Activated CD8-positive, alpha-beta T cell treated with anti-CD3 and anti-CD28 coated beads for 36 hours (primary cell): ENCODE measurements at regions of chr12 and their contacts with region 1.

Region 1: DNA sequence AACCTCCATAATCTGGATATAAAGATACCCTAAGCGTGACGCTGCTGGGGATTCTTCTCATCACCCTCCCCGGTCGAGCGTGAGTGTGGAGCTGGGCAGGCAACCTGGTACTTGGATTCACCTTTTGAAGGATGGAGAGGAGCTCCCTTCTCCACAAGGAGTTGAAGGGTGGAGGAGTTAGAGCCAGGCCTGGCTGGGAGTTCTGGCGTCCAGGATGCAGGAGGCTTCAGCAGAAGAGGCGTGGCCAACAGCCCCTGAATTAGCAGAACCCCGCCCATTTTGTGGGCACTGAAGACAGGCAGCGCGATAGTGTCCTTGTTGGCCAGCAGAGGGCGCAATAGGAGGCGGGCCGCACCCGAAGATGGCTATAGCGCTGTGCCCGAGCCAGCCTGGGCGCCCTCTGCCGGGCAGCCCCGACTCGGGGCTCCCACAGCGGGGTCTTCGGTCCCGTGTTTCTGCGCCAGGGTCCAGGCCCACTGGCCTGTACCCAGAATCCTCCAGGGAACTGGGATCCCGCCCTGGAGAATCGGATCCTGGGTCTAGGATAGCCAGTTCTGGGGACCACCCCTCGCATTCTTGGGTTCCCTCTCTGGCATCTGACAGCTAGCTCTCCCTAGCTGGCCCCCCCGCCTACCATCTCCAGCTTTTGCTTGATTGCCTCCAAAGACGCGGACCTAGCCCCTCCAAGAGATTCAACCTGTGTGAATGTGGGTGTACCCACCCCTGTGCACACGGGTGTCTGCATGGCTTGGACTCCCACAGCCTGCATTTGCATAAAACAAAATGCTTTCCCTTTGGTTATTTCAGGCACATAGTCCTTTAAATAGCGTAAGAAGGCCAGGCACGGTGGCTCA is 26.0 kb upstream of the SMUG1 start:
- DNase-seq: peak; percentile 95
- ATAC-seq: peak; percentile 88
- H3K4me3 Mint-ChIP-seq: peak overlapping the region; percentile 76
- H3K27ac Mint-ChIP-seq: no peak overlapping the region
- H3K4me1 Mint-ChIP-seq: peaks cover 21% of the 10 kb centered on the region
- H3K27me3 Mint-ChIP-seq: peaks cover 20% of the 10 kb centered on the region
- CTCF ChIP-seq: peak; percentile 100

Region 2: DNA sequence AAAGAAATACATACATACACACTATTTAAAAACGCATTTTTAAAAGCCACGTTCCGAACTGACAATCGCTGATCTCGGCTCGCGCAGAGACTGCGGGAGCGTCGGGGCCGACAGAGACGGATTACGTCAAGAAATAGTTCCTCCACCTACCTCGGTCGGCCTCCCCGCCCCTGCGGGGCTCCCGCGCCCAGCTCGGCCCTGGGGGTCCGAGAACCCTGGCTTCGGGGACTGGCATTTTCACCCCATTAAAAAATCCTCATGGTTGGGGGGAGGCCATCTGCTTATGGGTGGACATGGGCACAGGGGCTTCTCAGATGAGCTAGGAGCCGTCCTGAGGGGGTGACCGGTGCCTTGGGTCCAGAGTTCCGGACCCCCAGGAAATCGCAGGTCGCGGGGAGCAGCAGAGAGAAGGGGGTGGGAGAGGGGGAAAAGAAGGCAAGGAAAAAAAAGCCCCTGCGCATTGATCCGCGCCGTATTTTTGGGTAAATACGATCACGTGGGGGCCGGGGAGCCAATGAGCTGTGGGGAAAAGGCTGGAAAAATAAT is 215.1 kb before region 1 on chr12:
- CTCF ChIA-PET with region 1: interaction called, 16 read pairs
- POLR2A ChIA-PET with region 1: no interaction called
- intact Hi-C with region 1: no loop called
- DNase-seq: peak; percentile 55
- ATAC-seq: no peak
- H3K4me3 Mint-ChIP-seq: peak overlapping the region; percentile 43
- H3K27ac Mint-ChIP-seq: no peak overlapping the region
- H3K4me1 Mint-ChIP-seq: peaks cover 26% of the 10 kb centered on the region
- H3K27me3 Mint-ChIP-seq: peaks cover 85% of the 10 kb centered on the region
- CTCF ChIP-seq: no peak

Region 3: GRCh38 chr12:54131641-54132280 is 83.0 kb before region 1 on chr12:
- CTCF ChIA-PET with region 1: no interaction called
- POLR2A ChIA-PET with region 1: no interaction called
- intact Hi-C with region 1: no loop called
- DNase-seq: no peak
- ATAC-seq: no peak
- H3K4me3 Mint-ChIP-seq: no peak overlapping the region
- H3K27ac Mint-ChIP-seq: no peak overlapping the region
- H3K4me1 Mint-ChIP-seq: peaks cover 6% of the 10 kb centered on the region
- H3K27me3 Mint-ChIP-seq: peaks cover 24% of the 10 kb centered on the region
- CTCF ChIP-seq: no peak

Region 4: GRCh38 chr12:54147186-54147585 is 67.6 kb before region 1 on chr12:
- CTCF ChIA-PET with region 1: no interaction called
- POLR2A ChIA-PET with region 1: no interaction called
- intact Hi-C with region 1: no loop called
- DNase-seq: no peak
- ATAC-seq: no peak
- H3K4me3 Mint-ChIP-seq: no peak overlapping the region
- H3K27ac Mint-ChIP-seq: no peak overlapping the region
- H3K4me1 Mint-ChIP-seq: no peaks in the 10 kb centered on the region
- H3K27me3 Mint-ChIP-seq: no peaks in the 10 kb centered on the region
- CTCF ChIP-seq: no peak

Region 5: DNA sequence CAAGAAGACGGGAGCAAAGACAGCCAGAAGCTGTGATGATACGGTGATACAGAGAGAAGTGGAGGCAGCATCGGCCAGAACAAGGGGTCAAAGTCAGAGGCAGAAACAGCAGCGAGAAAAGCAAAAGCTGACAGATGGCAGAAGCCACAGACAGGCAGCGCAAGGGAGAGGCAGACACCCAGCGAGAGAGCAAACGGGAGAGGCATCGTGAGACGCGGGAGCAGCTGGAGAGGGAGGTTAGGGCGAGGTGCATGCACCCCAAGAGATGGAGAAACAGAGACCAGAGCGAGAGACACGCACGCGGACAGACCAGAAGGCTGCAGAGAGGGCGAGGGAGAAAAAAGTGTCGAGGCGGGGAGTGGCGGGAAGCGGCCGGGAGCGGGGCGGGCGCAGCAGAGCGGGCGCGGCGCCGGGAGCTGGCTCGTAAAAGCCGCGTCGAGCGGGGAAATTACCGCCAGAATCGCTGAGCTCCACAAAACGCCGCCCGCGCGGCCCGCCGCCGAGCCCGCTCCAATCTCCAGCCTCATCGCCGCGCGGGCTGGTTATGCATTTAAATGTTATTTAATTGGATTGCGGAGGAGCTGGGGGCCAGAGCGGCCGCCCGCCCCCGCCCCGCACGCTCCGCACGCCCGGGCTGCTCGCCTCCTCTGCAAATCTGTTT is 41.6 kb before region 1 on chr12:
- CTCF ChIA-PET with region 1: interaction called, 11 read pairs
- POLR2A ChIA-PET with region 1: no interaction called
- intact Hi-C with region 1: no loop called
- DNase-seq: peak; percentile 51
- ATAC-seq: peak; percentile 76
- H3K4me3 Mint-ChIP-seq: no peak overlapping the region
- H3K27ac Mint-ChIP-seq: no peak overlapping the region
- H3K4me1 Mint-ChIP-seq: no peaks in the 10 kb centered on the region
- H3K27me3 Mint-ChIP-seq: peaks cover 4% of the 10 kb centered on the region
- CTCF ChIP-seq: no peak

Region 6: DNA sequence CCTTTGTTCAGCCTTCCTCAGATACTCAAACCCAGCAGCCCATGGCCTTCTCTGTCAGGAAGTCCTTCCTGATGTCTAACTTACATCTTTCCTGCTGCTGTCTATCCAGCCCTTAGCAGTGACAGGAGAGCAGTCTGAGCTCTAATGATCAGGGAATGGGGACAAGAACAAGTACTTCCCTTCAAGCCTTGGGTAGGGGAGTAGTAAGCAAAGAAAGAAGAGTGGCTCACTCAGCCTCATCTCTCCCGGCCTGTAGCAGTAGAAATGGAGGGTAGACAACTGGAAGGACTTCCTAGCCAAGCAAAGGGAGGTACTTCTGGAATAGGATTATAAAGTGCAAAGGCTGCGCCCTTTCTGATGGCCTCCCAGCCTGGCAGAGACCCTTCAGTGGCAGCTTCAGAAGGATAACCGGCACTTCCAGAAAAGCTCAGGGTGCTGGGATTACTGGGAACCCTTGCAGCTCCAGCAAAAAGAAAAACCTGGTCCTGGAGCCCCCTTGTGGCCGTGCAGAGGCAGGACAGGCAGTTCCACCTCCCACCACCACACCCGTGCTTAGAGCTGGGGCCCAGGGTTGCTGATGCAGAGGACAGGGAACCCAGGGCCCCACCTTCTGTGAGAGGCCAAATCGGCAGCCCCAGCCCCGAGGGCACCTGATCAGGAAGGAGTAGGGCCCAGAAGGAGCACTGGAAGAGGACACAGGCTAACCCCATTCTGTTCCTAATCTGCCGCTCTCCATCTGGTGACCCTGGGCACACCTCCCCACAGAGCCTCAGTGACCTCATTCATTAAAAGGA is 13.6 kb before region 1 on chr12:
- CTCF ChIA-PET with region 1: interaction called, 45 read pairs
- POLR2A ChIA-PET with region 1: no interaction called
- intact Hi-C with region 1: no loop called
- DNase-seq: peak; percentile 72
- ATAC-seq: peak; percentile 96
- H3K4me3 Mint-ChIP-seq: no peak overlapping the region
- H3K27ac Mint-ChIP-seq: no peak overlapping the region
- H3K4me1 Mint-ChIP-seq: no peaks in the 10 kb centered on the region
- H3K27me3 Mint-ChIP-seq: peaks cover 52% of the 10 kb centered on the region
- CTCF ChIP-seq: peak; percentile 94

Region 7: DNA sequence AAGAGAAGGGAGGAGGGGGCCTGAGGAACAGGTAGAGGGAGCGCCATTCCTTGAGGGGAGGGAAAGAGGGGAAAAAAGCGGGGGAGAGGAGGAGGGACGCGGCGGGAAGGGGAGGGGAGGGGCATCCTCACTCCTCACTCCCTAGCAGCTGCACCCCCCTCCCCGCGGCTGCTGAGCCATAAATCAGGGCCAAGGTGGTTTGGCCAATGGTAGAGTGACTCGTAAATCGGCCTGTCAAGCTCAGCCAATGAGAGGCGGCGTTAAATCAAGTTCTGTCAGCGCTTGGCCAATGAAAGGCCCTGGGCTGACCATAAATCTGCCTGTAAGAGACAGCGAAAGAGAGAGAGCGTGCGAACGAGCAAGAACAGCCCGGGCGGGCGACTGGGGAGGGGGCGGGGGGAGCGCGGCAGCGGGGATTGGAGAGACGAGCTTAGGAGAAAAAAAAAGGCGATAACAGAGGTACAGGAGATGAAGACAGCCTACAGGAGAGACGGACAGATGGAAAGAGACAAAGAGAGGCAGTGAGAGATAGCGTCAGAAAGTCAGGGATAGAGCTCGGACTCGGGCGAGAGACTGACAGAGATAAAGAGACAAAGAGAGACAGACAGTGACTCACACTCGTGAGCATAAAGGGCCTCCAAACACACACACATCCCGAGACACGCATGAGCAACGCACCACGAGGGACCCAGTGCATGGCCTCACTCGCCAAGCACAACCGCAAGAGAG is 144.4 kb after region 1 on chr12:
- CTCF ChIA-PET with region 1: interaction called, 19 read pairs
- POLR2A ChIA-PET with region 1: no interaction called
- intact Hi-C with region 1: no loop called
- DNase-seq: peak; percentile 97
- ATAC-seq: peak; percentile 93
- H3K4me3 Mint-ChIP-seq: no peak overlapping the region
- H3K27ac Mint-ChIP-seq: no peak overlapping the region
- H3K4me1 Mint-ChIP-seq: peaks cover 17% of the 10 kb centered on the region
- H3K27me3 Mint-ChIP-seq: no peaks in the 10 kb centered on the region
- CTCF ChIP-seq: no peak